HEK293 (cell line): ENCODE measurements at regions of chr14 and their contacts with region 1.

Region 1: GRCh38 chr14:75709207-75709812 is 48.3 kb downstream of the TTLL5 start:
- H3K4me3 ChIP-seq: no peak overlapping the region
- H3K27ac ChIP-seq: no peak overlapping the region
- H3K4me1 ChIP-seq: peaks cover 10% of the 10 kb centered on the region
- CTCF ChIP-seq: no peak

Region 2: GRCh38 chr14:75689012-75689411 is 20.3 kb before region 1 on chr14:
- CTCF ChIA-PET with region 1: interaction called, 10 read pairs
- POLR2A ChIA-PET with region 1: no interaction called
- H3K4me3 ChIP-seq: no peak overlapping the region
- H3K27ac ChIP-seq: no peak overlapping the region
- H3K4me1 ChIP-seq: no peaks in the 10 kb centered on the region
- CTCF ChIP-seq: no peak

Region 3: GRCh38 chr14:75822522-75823141 is 113.3 kb after region 1 on chr14:
- CTCF ChIA-PET with region 1: interaction called, 12 read pairs
- POLR2A ChIA-PET with region 1: no interaction called
- H3K4me3 ChIP-seq: no peak overlapping the region
- H3K27ac ChIP-seq: peak overlapping the region; percentile 74
- H3K4me1 ChIP-seq: peaks cover 12% of the 10 kb centered on the region
- CTCF ChIP-seq: no peak

Region 4: DNA sequence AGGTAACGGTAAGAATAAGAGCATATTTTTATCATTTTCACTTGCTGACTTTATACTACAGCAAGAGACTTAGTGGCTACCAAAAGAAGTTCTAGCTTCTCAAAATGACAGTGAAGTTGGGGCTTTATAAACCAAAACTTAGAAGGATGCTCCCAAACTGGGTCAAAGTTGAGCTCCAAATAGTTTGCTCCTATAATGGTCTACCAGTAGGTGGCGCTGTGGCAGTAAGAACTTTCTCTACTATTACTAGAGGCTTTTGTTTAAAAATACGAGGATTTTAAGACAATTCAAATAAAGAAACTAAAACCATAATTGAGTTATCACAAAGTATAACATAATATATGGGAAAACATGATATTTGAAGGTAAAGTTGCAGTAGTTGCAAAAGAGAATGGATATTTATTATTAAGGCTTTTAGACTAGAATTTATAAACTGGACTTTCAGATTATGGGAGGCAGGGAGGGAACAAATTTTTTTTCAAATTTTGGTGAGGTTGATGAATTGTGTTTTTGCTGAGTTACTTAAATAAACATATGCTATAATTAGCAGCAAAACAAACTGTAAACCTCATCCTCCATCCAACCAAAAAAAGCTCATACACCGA is 197.5 kb after region 1 on chr14:
- CTCF ChIA-PET with region 1: interaction called, 38 read pairs
- POLR2A ChIA-PET with region 1: no interaction called
- H3K4me3 ChIP-seq: no peak overlapping the region
- H3K27ac ChIP-seq: no peak overlapping the region
- H3K4me1 ChIP-seq: peaks cover 17% of the 10 kb centered on the region
- CTCF ChIP-seq: 0 out of 2 replicates have a peak, but pooled peaks have one; percentile 6

Region 5: DNA sequence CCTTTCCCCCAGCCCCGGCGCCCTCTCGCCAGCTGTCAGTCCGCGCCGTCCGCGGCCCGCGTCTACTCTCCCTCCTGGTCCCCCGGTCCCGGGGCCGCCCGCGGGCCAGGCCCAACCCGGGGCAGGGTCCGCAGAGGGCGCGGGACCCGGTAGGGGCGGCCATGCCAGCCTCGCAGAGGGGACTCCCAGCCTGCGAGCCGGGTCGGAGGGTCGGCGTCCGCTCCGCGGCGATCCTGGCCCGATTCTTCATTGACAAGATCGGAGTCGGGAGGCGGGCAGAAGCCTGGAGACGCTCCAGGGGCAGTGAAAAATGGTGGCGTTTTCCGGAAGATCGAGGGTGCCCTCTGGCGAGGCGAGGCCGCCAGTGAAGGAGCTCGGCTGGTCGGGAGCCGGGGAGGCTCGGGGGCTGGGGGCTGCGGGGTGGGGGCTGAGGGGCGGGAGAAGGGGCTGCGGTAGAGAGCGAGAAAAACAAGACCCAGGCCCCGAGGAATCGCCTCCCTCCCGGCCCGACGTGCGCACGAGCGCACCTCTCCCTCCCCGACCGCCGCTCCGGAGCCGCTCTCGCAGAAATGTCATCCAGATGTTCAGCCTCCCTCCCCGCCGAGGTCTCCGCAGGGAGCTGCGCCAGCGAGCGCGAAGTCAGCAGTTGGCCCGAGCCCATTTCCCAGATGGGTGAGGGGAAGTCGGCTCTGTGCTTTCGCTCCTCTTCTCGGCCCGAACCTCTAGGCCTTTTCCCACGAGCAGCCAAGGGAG is 273.1 kb after region 1 on chr14:
- CTCF ChIA-PET with region 1: interaction called, 259 read pairs
- POLR2A ChIA-PET with region 1: interaction called, 7 read pairs
- H3K4me3 ChIP-seq: peak overlapping the region; percentile 58
- H3K27ac ChIP-seq: peak overlapping the region; percentile 86
- H3K4me1 ChIP-seq: peaks cover 7% of the 10 kb centered on the region
- CTCF ChIP-seq: no peak

Region 6: GRCh38 chr14:76386915-76387782 is 677.8 kb after region 1 on chr14:
- CTCF ChIA-PET with region 1: interaction called, 10 read pairs
- POLR2A ChIA-PET with region 1: no interaction called
- H3K4me3 ChIP-seq: no peak overlapping the region
- H3K27ac ChIP-seq: no peak overlapping the region
- H3K4me1 ChIP-seq: no peaks in the 10 kb centered on the region
- CTCF ChIP-seq: peak; percentile 69